ENCODE measurements at regions of chr12 and their contacts with region 1.

Region 1: GRCh38 chr12:107702106-107702505 is 16.5 kb downstream of the PWP1 start:
- DNase-seq: no peak
- H3K4me3 ChIP-seq: no peak overlapping the region
- H3K27ac ChIP-seq: no peak overlapping the region
- H3K4me1 ChIP-seq: no peaks in the 10 kb centered on the region
- H3K27me3 ChIP-seq: no peaks in the 10 kb centered on the region
- CTCF ChIP-seq: no peak
- EP300 ChIP-seq: no peak
- POLR2A ChIP-seq: no peak

Region 2: DNA sequence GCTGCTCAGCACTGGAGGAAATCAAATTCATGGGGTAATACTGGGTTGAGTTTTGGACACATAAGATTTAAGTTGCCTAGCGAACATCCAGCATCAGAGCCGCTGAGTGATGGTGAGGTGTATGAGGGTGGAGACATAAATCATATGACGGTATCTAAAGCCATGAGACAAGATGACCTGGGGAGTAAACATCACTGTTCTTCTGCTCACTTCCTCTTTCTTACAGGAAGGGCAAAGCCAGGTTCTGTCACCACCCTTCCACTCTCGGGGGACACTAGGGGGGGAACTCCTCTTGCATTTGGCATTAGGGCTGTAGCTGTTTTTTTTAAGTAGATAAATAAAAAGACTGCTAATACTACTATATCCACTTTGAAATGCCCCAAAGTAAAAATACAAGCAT is 34.8 kb after region 1 on chr12:
- intact Hi-C with region 1: loop called (anchors 5 kb)
- DNase-seq: no peak
- H3K4me3 ChIP-seq: no peak overlapping the region
- H3K27ac ChIP-seq: no peak overlapping the region
- H3K4me1 ChIP-seq: no peaks in the 10 kb centered on the region
- H3K27me3 ChIP-seq: no peaks in the 10 kb centered on the region
- CTCF ChIP-seq: no peak
- EP300 ChIP-seq: no peak
- POLR2A ChIP-seq: no peak